B cell (primary cell): ENCODE measurements at regions of chr11 and their contacts with region 1.

Region 1: GRCh38 chr11:73625696-73626318 is 20.6 kb upstream of the PLEKHB1 start:
- DNase-seq: peak; percentile 75
- ATAC-seq: peak; percentile 89
- H3K4me3 ChIP-seq: no peak overlapping the region
- H3K4me3 Mint-ChIP-seq: no peak overlapping the region
- H3K27ac ChIP-seq: no peak overlapping the region
- H3K27ac Mint-ChIP-seq: no peak overlapping the region
- H3K4me1 ChIP-seq: peaks cover 7 to 14% of the 10 kb centered on the region in 2 donors
- H3K4me1 Mint-ChIP-seq: peaks cover 8% of the 10 kb centered on the region
- H3K27me3 ChIP-seq: peaks cover 0 to 11% (median 0%) of the 10 kb centered on the region in 4 experiments
- H3K27me3 Mint-ChIP-seq: peaks cover 6% of the 10 kb centered on the region
- CTCF ChIP-seq: peak; percentile 91

Region 2: DNA sequence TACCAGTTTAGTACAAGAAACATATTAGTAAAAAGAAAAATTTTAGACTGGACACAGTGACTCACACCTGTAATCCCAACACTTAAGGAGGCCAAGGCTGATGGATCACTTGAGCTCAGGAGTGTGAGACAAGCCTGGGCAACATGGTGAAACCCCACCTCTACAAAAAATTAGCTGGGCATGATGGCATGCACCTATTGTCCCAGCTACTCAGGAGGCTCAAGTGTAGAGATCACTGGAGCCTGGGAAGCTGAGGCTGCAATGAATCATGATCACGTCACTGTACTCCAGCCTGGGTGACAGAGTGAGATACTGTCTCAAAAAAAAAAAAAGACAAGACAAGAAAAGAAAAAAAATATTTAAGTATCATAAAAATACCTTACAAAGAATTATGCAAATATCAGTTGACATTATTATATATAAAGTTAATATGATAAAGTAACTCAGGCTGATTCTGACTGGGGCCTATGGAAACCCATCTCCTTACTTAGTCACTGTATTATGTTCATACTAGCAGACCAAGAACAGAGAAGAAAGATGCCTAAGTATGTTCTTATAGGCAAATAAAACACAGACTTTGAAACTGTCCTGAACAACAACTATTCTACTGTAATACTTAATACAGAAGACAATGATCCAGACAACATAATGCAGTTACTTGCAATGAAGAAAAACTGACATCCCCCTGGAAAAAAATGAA is 55.2 kb before region 1 on chr11:
- CTCF ChIA-PET with region 1: no interaction called
- POLR2A ChIA-PET with region 1: no interaction called
- intact Hi-C with region 1: no loop called
- DNase-seq: no peak
- ATAC-seq: no peak
- H3K4me3 ChIP-seq: no peak overlapping the region
- H3K4me3 Mint-ChIP-seq: no peak overlapping the region
- H3K27ac ChIP-seq: no peak overlapping the region
- H3K27ac Mint-ChIP-seq: no peak overlapping the region
- H3K4me1 ChIP-seq: no peaks in the 10 kb centered on the region
- H3K4me1 Mint-ChIP-seq: no peaks in the 10 kb centered on the region
- H3K27me3 ChIP-seq: no peaks in the 10 kb centered on the region
- H3K27me3 Mint-ChIP-seq: no peaks in the 10 kb centered on the region
- CTCF ChIP-seq: no peak

Region 3: DNA sequence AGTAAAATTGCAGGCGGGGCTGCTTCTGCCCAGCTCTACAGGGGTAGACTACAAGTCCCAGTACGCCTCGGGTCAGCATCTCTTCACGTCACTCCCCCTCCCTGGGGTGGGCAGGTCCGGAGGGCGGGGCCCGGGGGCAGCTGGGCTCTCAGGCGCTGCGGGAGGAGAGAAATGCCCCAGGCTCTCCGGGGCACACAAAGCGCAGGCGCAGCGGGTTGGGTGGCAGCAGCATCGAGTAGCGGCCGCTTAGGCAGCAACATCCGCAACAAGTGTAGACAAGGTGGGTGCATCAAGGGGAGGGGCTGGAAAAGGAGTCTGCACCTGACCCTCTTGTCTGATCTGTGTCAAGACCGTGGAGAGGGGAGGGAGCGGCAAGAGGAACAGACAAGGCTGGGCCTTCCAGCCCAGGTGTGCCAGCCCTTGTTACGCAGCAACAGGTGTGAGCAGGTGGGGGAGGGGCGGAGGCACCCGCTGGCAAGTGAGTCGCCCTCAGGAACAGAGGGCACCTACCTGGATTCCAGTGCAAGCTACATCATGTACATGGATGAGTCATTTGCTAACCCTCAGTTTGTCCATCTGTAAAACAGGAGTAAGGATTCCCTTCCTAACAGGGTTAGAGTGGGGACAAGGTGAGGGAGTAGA is 21.8 kb after region 1 on chr11:
- CTCF ChIA-PET with region 1: interaction called, 9 read pairs
- POLR2A ChIA-PET with region 1: interaction called, 3 read pairs
- intact Hi-C with region 1: loop called (anchors 2 kb)
- DNase-seq: peak; percentile 92
- ATAC-seq: peak; percentile 100
- H3K4me3 ChIP-seq: peak overlapping the region in 4 of 5 experiments; percentile 23 to 56 (median 48)
- H3K4me3 Mint-ChIP-seq: peak overlapping the region; percentile 87
- H3K27ac ChIP-seq: no peak overlapping the region
- H3K27ac Mint-ChIP-seq: peak overlapping the region; percentile 87
- H3K4me1 ChIP-seq: peaks cover 11 to 20% of the 10 kb centered on the region in 2 donors
- H3K4me1 Mint-ChIP-seq: peaks cover 23% of the 10 kb centered on the region
- H3K27me3 ChIP-seq: peaks cover 0 to 5% (median 0%) of the 10 kb centered on the region in 4 experiments
- H3K27me3 Mint-ChIP-seq: peaks cover 4% of the 10 kb centered on the region
- CTCF ChIP-seq: no peak

Region 4: DNA sequence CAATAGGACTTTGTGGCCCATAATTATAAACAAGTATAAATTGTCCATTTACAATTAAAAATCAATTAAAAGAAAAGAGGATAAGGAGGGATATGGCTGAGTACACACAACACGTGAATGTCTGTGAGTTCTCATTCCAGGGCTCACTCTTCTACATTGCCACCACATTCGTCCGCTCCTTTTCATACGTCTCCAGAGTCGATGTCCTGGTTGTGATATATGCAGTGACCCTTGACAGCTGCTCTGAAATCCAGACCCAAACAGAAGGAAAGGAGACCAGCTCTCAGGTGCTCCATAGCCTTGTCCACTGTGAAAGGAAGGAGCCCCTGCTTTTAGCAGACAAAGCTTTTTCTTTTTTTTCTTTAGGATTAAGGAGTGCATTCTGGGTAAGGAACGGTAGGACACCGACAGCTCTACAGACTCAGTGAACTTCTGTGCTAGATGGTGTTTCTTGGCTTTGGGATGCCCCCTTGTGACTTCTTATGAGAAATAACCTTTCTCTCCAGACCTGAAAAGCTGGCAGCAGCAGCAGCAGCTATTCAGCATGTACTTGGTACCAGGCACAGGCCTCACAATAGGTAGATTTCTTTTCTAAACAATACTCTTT is 305.3 kb after region 1 on chr11:
- CTCF ChIA-PET with region 1: interaction called, 6 read pairs
- POLR2A ChIA-PET with region 1: no interaction called
- intact Hi-C with region 1: loop called (anchors 10 kb)
- DNase-seq: peak; percentile 14
- ATAC-seq: no peak
- H3K4me3 ChIP-seq: no peak overlapping the region
- H3K4me3 Mint-ChIP-seq: no peak overlapping the region
- H3K27ac ChIP-seq: no peak overlapping the region
- H3K27ac Mint-ChIP-seq: no peak overlapping the region
- H3K4me1 ChIP-seq: no peaks in the 10 kb centered on the region
- H3K4me1 Mint-ChIP-seq: no peaks in the 10 kb centered on the region
- H3K27me3 ChIP-seq: no peaks in the 10 kb centered on the region
- H3K27me3 Mint-ChIP-seq: no peaks in the 10 kb centered on the region
- CTCF ChIP-seq: no peak

Region 5: GRCh38 chr11:74185695-74186094 is 559.9 kb after region 1 on chr11:
- CTCF ChIA-PET with region 1: no interaction called
- POLR2A ChIA-PET with region 1: no interaction called
- intact Hi-C with region 1: no loop called
- DNase-seq: no peak
- ATAC-seq: no peak
- H3K4me3 ChIP-seq: no peak overlapping the region
- H3K4me3 Mint-ChIP-seq: no peak overlapping the region
- H3K27ac ChIP-seq: no peak overlapping the region
- H3K27ac Mint-ChIP-seq: no peak overlapping the region
- H3K4me1 ChIP-seq: no peaks in the 10 kb centered on the region
- H3K4me1 Mint-ChIP-seq: peaks cover 2% of the 10 kb centered on the region
- H3K27me3 ChIP-seq: no peaks in the 10 kb centered on the region
- H3K27me3 Mint-ChIP-seq: no peaks in the 10 kb centered on the region
- CTCF ChIP-seq: no peak